ENCODE measurements at regions of chr16 and their contacts with region 1.

Region 1: DNA sequence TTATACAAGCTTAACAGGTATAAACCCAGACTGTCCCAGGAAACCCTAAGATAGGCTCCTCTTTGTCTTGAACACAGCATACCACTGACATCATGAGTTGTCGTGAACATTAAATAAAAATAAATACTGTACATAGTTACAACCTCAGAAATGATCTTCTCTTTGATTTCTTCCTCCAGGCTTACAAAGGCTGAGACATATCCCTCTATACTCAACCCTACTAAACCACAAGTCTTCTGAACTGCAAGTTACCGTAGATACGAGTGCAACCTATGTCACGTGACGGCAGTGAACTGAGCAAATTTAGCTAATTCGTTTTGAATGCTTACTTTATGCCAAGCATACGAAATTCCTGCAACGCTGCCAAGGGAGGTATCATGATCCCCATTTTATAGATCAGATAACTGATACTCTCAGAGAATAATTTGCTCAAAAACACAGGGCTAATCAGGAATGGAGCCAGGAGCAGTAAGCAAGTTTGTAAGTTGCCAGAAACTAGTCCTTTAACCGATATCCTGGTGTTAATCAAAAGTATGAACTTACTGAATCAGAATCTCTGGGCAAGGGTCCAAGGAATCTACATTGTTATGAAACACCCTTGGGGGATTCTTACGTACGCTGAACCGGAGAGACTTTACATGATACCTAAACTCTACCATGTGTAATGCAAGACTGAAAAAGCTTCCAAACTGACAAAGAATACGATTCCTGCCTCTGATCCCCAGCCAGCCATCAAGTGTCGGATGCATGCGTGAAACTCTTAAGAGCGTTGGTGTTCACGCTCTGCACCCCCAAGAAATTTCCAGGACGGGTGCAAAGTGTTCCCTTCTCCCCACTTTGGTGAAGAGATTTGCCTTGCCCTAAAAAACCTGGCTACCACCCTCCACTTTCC is 106.2 kb downstream of the XYLT1 start:
- DNase-seq: peak in 7 of 9 donors; percentile 81 to 95 (median 91)
- ATAC-seq: peak; percentile 90
- H3K4me3 ChIP-seq: peak overlapping the region; percentile 28
- H3K4me3 Mint-ChIP-seq: peak overlapping the region; percentile 48 to 90 (median 73)
- H3K27ac ChIP-seq: peak overlapping the region; percentile 95
- H3K27ac Mint-ChIP-seq: peak overlapping the region; percentile 97 to 100 (median 99)
- H3K4me1 ChIP-seq: peaks cover 90 to 91% of the 10 kb centered on the region in 2 donors
- H3K4me1 Mint-ChIP-seq: peaks cover 68 to 100% (median 97%) of the 10 kb centered on the region in 7 donors
- H3K27me3 ChIP-seq: no peaks in the 10 kb centered on the region
- H3K27me3 Mint-ChIP-seq: no peaks in the 10 kb centered on the region

Region 2: DNA sequence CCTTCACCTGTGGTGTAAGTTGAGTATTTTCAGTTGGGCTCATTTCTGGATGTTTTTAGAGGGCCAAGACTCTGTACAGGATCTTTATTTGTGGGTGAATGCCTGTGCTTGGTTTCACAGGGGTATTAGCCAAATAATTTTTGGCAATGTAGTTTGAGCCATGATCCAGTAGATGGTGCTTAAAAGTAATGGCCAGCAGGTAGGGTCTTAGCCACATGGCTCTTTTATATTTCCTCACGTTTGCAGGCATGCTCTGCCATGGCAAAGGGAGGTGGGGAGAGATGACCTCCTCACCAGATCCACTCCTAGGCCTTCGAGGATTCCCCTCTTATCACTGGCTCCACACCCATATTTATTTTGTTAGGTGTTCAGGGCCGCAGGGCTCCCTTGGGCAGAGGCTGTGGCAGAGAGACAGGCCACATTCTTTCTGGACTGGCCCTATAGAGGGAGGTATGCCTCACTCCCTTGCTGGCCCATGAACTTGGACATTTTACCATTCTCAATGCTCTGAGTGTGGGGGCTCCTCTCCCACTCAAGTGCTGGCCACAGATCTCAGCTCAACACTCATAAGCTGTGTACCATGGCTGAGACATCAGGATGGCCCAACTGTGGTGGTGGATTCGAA is 310.9 kb before region 1 on chr16:
- CTCF ChIA-PET with region 1: no interaction called
- POLR2A ChIA-PET with region 1: no interaction called
- intact Hi-C with region 1: no loop called
- DNase-seq: no peak
- ATAC-seq: no peak
- H3K4me3 ChIP-seq: no peak overlapping the region
- H3K4me3 Mint-ChIP-seq: no peak overlapping the region
- H3K27ac ChIP-seq: no peak overlapping the region
- H3K27ac Mint-ChIP-seq: no peak overlapping the region
- H3K4me1 ChIP-seq: no peaks in the 10 kb centered on the region
- H3K4me1 Mint-ChIP-seq: peaks cover 0 to 5% (median 0%) of the 10 kb centered on the region in 7 donors
- H3K27me3 ChIP-seq: no peaks in the 10 kb centered on the region
- H3K27me3 Mint-ChIP-seq: peaks cover 0 to 6% (median 0%) of the 10 kb centered on the region in 5 donors

Region 3: GRCh38 chr16:17397499-17397891 is 32.9 kb after region 1 on chr16:
- CTCF ChIA-PET with region 1: interaction called, 10 read pairs
- POLR2A ChIA-PET with region 1: no interaction called
- intact Hi-C with region 1: loop called in 1 of 2 experiments (anchors 1 kb)
- DNase-seq: peak in 1 of 9 donors; percentile 24
- ATAC-seq: no peak
- H3K4me3 ChIP-seq: peak overlapping the region; percentile 24
- H3K4me3 Mint-ChIP-seq: peak overlapping the region in 5 of 10 donors; percentile 11 to 65 (median 47)
- H3K27ac ChIP-seq: peak overlapping the region; percentile 47
- H3K27ac Mint-ChIP-seq: peak overlapping the region; percentile 14 to 95 (median 87)
- H3K4me1 ChIP-seq: peaks cover 25 to 29% of the 10 kb centered on the region in 2 donors
- H3K4me1 Mint-ChIP-seq: peaks cover 20 to 62% (median 54%) of the 10 kb centered on the region in 7 donors
- H3K27me3 ChIP-seq: no peaks in the 10 kb centered on the region
- H3K27me3 Mint-ChIP-seq: no peaks in the 10 kb centered on the region

Region 4: GRCh38 chr16:17416461-17417311 is 52.1 kb after region 1 on chr16:
- CTCF ChIA-PET with region 1: interaction called, 10 read pairs
- POLR2A ChIA-PET with region 1: interaction called, 21 read pairs
- intact Hi-C with region 1: loop called (anchors 1 to 5 kb)
- DNase-seq: peak; percentile 24 to 65 (median 55)
- ATAC-seq: peak; percentile 93
- H3K4me3 ChIP-seq: peak overlapping the region; percentile 22
- H3K4me3 Mint-ChIP-seq: peak overlapping the region; percentile 68 to 91 (median 85)
- H3K27ac ChIP-seq: peak overlapping the region; percentile 60
- H3K27ac Mint-ChIP-seq: peak overlapping the region; percentile 79 to 97 (median 91)
- H3K4me1 ChIP-seq: peaks cover 13 to 14% of the 10 kb centered on the region in 2 donors
- H3K4me1 Mint-ChIP-seq: peaks cover 18 to 69% (median 52%) of the 10 kb centered on the region in 7 donors
- H3K27me3 ChIP-seq: no peaks in the 10 kb centered on the region
- H3K27me3 Mint-ChIP-seq: no peaks in the 10 kb centered on the region